ENCODE measurements at regions of chr1 and their contacts with region 1.

Region 1: GRCh38 chr1:100921109-100921706 is 25.3 kb downstream of the SLC30A7 start:
- DNase-seq: no peak
- ATAC-seq: no peak
- H3K4me3 Mint-ChIP-seq: no peak overlapping the region
- H3K27ac Mint-ChIP-seq: peak overlapping the region; percentile 70
- H3K4me1 Mint-ChIP-seq: peaks cover 43% of the 10 kb centered on the region
- H3K27me3 Mint-ChIP-seq: no peaks in the 10 kb centered on the region

Region 2: GRCh38 chr1:100132566-100133477 is 788.4 kb before region 1 on chr1 and contains the starts of genes SASS6 and TRMT13:
- CTCF ChIA-PET with region 1: no interaction called
- POLR2A ChIA-PET with region 1: no interaction called
- intact Hi-C with region 1: no loop called
- DNase-seq: peak; percentile 97
- ATAC-seq: peak; percentile 94
- H3K4me3 Mint-ChIP-seq: peak within 1 kb of the TSS; percentile 98
- H3K27ac Mint-ChIP-seq: peak within 1 kb of the TSS; percentile 98
- H3K4me1 Mint-ChIP-seq: peaks cover 32% of the 10 kb centered on the region
- H3K27me3 Mint-ChIP-seq: no peaks in the 10 kb centered on the region
- total RNA-seq, gene SASS6: 14.2 to 17.4 TPM
- total RNA-seq, gene TRMT13: 19.0 to 20.2 TPM

Region 3: DNA sequence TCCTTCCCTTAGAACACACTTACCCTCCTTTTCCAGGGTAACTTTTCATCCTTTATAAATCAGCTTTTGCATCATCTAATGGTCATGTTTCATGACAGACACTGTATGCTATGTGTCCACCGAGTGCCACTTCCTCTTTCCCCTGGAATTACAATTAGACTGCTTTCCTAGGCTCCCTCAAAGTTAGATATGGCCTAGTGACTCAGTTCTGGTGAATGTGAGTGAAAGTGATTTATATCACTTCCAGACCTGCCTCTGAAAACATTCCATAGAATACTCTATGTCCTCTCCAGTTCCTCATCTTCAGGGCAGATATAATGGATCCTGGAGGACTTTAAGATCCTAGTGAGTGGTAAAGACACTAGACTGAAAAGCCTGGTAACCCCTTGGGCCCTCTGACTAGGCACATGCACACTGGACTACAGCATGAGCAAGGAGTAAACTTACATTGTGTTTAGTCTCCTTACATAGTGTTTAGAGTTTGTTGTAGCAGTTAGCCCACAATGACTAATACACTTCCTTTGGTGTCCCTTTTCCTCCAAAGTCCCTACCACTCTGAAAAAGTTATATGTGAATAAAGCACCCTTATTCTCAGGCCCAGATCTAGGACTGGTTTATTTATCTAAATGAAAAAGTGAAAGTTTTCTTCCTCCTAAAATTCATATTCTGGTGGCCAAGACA is 324.0 kb before region 1 on chr1:
- CTCF ChIA-PET with region 1: no interaction called
- POLR2A ChIA-PET with region 1: no interaction called
- intact Hi-C with region 1: no loop called
- DNase-seq: no peak
- ATAC-seq: no peak
- H3K4me3 Mint-ChIP-seq: no peak overlapping the region
- H3K27ac Mint-ChIP-seq: no peak overlapping the region
- H3K4me1 Mint-ChIP-seq: no peaks in the 10 kb centered on the region
- H3K27me3 Mint-ChIP-seq: peaks cover 1% of the 10 kb centered on the region

Region 4: GRCh38 chr1:100736746-100737145 is 184.5 kb before region 1 on chr1:
- CTCF ChIA-PET with region 1: no interaction called
- POLR2A ChIA-PET with region 1: no interaction called
- intact Hi-C with region 1: no loop called
- DNase-seq: no peak
- ATAC-seq: no peak
- H3K4me3 Mint-ChIP-seq: no peak overlapping the region
- H3K27ac Mint-ChIP-seq: no peak overlapping the region
- H3K4me1 Mint-ChIP-seq: no peaks in the 10 kb centered on the region
- H3K27me3 Mint-ChIP-seq: no peaks in the 10 kb centered on the region

Region 5: DNA sequence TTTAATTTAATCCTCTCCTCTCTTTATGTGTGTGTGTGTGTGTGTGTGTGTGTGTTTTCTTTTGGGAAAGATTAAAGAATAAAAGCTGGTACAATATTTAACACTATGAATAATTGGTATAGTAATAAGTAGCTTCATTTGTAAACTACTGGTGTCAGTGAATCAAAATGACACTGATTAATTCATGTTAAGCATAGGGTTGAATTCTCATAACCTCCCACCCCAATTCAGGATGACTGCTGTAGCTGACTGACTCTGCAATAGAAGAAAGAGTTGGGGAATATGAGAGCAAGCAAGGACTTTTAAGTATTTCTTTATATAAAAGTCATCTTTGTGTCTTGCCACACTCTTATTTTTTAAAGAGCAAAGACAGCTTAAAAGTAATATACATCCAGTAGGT is 12.2 kb before region 1 on chr1:
- CTCF ChIA-PET with region 1: interaction called, 16 read pairs
- POLR2A ChIA-PET with region 1: no interaction called
- intact Hi-C with region 1: no loop called
- DNase-seq: no peak
- ATAC-seq: peak; percentile 91
- H3K4me3 Mint-ChIP-seq: no peak overlapping the region
- H3K27ac Mint-ChIP-seq: peak overlapping the region; percentile 7
- H3K4me1 Mint-ChIP-seq: peaks cover 48% of the 10 kb centered on the region
- H3K27me3 Mint-ChIP-seq: no peaks in the 10 kb centered on the region

Region 6: DNA sequence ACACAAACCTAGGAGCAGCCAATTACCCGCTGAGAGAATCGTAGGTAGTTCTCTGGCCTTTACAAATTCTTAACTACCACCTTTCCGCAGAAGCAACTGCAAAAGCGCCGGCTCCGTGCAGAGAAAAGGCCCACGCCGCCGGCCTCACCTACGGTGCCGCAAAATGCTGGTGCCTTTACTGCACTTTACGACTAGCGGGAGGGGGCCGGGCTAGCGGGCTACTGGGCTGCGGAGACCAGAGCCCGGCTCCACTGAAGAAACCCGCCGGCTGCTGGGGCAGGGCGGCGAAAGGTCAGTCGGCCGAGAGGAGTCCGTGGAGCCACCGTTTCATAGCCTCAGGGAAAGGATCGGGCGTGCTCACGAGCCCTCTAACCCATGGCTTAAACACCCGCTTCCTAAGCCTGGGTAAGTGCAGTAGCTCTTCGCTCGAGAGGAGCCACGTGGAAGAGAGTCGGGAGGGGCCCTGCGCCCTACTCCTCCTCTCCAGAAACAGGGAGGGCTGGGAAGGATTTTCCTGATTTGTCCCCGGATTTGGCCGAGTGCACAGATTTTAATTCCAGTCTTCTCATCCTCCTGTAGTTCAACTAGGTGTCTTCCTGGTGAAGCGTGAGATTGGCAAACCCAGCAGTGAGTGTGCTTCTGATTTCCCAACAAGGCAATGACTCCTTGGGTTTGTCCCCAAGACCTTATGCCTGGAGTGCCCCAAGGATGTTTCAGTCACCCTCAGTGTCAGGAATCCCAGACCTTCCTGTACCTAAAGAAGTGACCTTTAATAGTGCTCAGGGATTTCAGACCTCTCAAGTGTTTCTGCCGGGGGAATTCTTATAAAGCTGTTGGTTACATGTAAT is 104.7 kb after region 1 on chr1 and contains the start of gene DPH5:
- CTCF ChIA-PET with region 1: interaction called, 4 read pairs
- POLR2A ChIA-PET with region 1: no interaction called
- intact Hi-C with region 1: loop called in 1 of 2 experiments (anchors 5 kb)
- DNase-seq: peak; percentile 95
- ATAC-seq: peak; percentile 96
- H3K4me3 Mint-ChIP-seq: peak within 1 kb of the TSS; percentile 93
- H3K27ac Mint-ChIP-seq: peak within 1 kb of the TSS; percentile 98
- H3K4me1 Mint-ChIP-seq: peaks cover 55% of the 10 kb centered on the region
- H3K27me3 Mint-ChIP-seq: no peaks in the 10 kb centered on the region
- total RNA-seq, gene DPH5: 48.4 to 59.6 TPM

Measured in activated CD4-positive, alpha-beta T cell treated with anti-CD3 and anti-CD28 coated beads for 36 hours (primary cell).